HepG2 (cell line): ENCODE measurements at regions of chr1 and their contacts with region 1.

Region 1: GRCh38 chr1:216566641-216567205 is 143.5 kb upstream of the USH2A start:
- DNase-seq: no peak
- ATAC-seq: no peak
- H3K4me3 ChIP-seq: no peak overlapping the region
- H3K27ac ChIP-seq: no peak overlapping the region
- H3K4me1 ChIP-seq: no peaks in the 10 kb centered on the region
- H3K27me3 ChIP-seq: no peaks in the 10 kb centered on the region
- CTCF ChIP-seq: no peak
- EP300 ChIP-seq: no peak
- POLR2A ChIP-seq: no peak
- RAD21 ChIP-seq: no peak

Region 2: DNA sequence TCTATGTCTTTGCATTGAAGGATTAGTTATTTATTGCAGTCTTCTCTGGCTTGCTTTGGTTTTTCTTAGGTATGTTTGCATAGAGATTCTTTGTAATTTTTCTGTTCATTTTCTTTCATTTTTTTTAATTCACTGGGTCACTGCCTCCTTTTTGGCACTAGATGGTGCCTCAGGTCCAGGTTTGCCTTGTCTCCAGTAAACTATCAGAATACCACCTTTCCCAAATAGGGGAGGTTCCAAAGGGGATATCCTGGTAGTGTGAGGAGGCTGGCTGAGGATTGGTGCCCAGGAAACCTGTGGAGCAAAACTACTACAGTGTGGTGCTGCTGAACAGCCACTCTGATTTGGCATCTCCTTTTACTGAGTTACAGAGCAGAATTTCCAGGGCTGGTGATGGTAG is 742.5 kb before region 1 on chr1:
- CTCF ChIA-PET with region 1: no interaction called
- POLR2A ChIA-PET with region 1: no interaction called
- in situ Hi-C with region 1: no loop called
- intact Hi-C with region 1: loop called (anchors 5 kb)
- DNase-seq: no peak
- ATAC-seq: no peak
- H3K4me3 ChIP-seq: no peak overlapping the region
- H3K27ac ChIP-seq: no peak overlapping the region
- H3K4me1 ChIP-seq: no peaks in the 10 kb centered on the region
- H3K27me3 ChIP-seq: no peaks in the 10 kb centered on the region
- CTCF ChIP-seq: 0 out of 2 replicates have a peak, but pooled peaks have one; percentile 22
- EP300 ChIP-seq: no peak
- POLR2A ChIP-seq: no peak
- RAD21 ChIP-seq: no peak

Region 3: DNA sequence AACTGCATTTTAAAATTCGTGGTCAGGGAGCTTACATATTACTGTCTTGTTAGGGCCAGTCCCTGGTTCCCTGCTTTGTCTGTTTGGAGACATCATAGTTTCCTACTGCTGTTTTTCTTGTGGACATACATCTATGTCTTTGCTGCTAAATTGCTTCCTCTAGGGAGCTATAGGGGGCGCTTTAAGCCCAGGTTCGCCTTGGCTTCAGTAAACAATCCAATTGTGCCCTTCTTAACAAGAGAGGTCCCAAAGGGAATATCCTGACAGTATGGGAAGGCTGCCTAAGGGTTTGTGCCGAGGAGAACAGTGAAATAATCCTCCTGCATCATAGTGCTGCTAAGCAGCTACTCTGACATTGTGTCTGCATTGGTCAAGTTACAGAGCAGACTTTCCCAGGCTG is 255.9 kb before region 1 on chr1:
- CTCF ChIA-PET with region 1: no interaction called
- POLR2A ChIA-PET with region 1: no interaction called
- in situ Hi-C with region 1: no loop called
- intact Hi-C with region 1: loop called (anchors 10 kb)
- DNase-seq: no peak
- ATAC-seq: no peak; the same call in 2 of the 3 replicates
- H3K4me3 ChIP-seq: no peak overlapping the region
- H3K27ac ChIP-seq: no peak overlapping the region
- H3K4me1 ChIP-seq: no peaks in the 10 kb centered on the region
- H3K27me3 ChIP-seq: no peaks in the 10 kb centered on the region
- CTCF ChIP-seq: peak; percentile 48
- EP300 ChIP-seq: no peak
- POLR2A ChIP-seq: no peak
- RAD21 ChIP-seq: no peak